Colonic mucosa (tissue), 4 donors: ENCODE measurements at regions of chr3 and their contacts with region 1.

Region 1: GRCh38 chr3:4656059-4656458 is 162.9 kb downstream of the ITPR1 start:
- DNase-seq: peak; percentile 43
- H3K4me3 ChIP-seq: no peak overlapping the region
- H3K27ac ChIP-seq: no peak overlapping the region
- H3K4me1 ChIP-seq: no peaks in the 10 kb centered on the region
- H3K27me3 ChIP-seq: no peaks in the 10 kb centered on the region
- CTCF ChIP-seq: peak; percentile 62

Region 2: GRCh38 chr3:4493014-4493940 is 162.8 kb before region 1 on chr3 and contains the start of gene ITPR1:
- intact Hi-C with region 1: no loop called
- DNase-seq: peak; percentile 98
- H3K4me3 ChIP-seq: peak within 1 kb of the TSS; percentile 61
- H3K27ac ChIP-seq: peak within 1 kb of the TSS; percentile 63
- H3K4me1 ChIP-seq: peaks cover 9% of the 10 kb centered on the region
- H3K27me3 ChIP-seq: no peaks in the 10 kb centered on the region
- CTCF ChIP-seq: no peak
- total RNA-seq, gene ITPR1: 7.0 to 18.2 TPM

Region 3: GRCh38 chr3:4754180-4755086 is 98.4 kb after region 1 on chr3:
- intact Hi-C with region 1: no loop called
- DNase-seq: no peak
- H3K4me3 ChIP-seq: no peak overlapping the region
- H3K27ac ChIP-seq: no peak overlapping the region
- H3K4me1 ChIP-seq: peaks cover 33% of the 10 kb centered on the region
- H3K27me3 ChIP-seq: no peaks in the 10 kb centered on the region
- CTCF ChIP-seq: no peak

Region 4: DNA sequence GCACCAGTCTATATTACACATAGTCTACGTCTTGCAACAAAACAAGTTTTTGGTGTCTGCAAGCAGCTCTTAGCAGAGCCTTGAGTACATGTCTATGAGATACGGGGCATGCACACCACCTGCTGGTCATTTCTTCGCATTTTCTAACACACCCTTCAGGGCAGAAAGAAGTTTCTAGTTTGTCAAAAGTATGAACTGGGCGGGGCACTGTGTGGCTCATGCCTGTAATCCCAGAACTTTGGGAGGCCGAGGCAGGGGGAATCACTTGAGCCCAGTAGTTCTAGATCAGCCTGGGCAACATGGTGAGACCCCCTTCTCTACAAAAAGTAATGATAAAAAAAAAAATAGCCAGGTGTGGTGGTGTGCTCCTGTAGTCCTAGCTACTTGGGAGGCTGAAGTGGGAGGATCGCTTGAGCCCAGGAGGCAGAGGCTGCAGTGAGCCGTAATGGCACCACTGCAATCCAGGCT is 401.8 kb after region 1 on chr3:
- intact Hi-C with region 1: loop called (anchors 5 kb)
- DNase-seq: peak; percentile 86
- H3K4me3 ChIP-seq: no peak overlapping the region
- H3K27ac ChIP-seq: no peak overlapping the region
- H3K4me1 ChIP-seq: no peaks in the 10 kb centered on the region
- H3K27me3 ChIP-seq: no peaks in the 10 kb centered on the region
- CTCF ChIP-seq: peak; percentile 64

Region 5: GRCh38 chr3:5170975-5171374 is 514.9 kb after region 1 on chr3:
- intact Hi-C with region 1: no loop called
- DNase-seq: no peak
- H3K4me3 ChIP-seq: no peak overlapping the region
- H3K27ac ChIP-seq: no peak overlapping the region
- H3K4me1 ChIP-seq: no peaks in the 10 kb centered on the region
- H3K27me3 ChIP-seq: no peaks in the 10 kb centered on the region
- CTCF ChIP-seq: no peak